ENCODE measurements at regions of chr2 and their contacts with region 1.

Region 1: GRCh38 chr2:200306196-200306930 is at the start of gene SPATS2L:
- DNase-seq: no peak
- ATAC-seq: peak; percentile 87
- H3K4me3 ChIP-seq: peak within 1 kb of the TSS; percentile 72 to 84
- H3K27ac ChIP-seq: peak within 1 kb of the TSS; percentile 98
- H3K4me1 ChIP-seq: peaks cover 67% of the 10 kb centered on the region
- H3K27me3 ChIP-seq: no peaks in the 10 kb centered on the region
- CTCF ChIP-seq: no peak
- total RNA-seq, gene SPATS2L: 282 TPM

Region 2: GRCh38 chr2:199979832-199980628 is 326.3 kb before region 1 on chr2:
- CTCF ChIA-PET with region 1: no interaction called
- POLR2A ChIA-PET with region 1: no interaction called
- in situ Hi-C with region 1: no loop called
- intact Hi-C with region 1: loop called (anchors 2 kb)
- DNase-seq: no peak
- ATAC-seq: peak; percentile 87
- H3K4me3 ChIP-seq: peak overlapping the region in 1 of 2 experiments; percentile 25; a peak in 2 of 4 replicates
- H3K27ac ChIP-seq: peak overlapping the region; percentile 74
- H3K4me1 ChIP-seq: peaks cover 17% of the 10 kb centered on the region
- H3K27me3 ChIP-seq: no peaks in the 10 kb centered on the region
- CTCF ChIP-seq: peak; percentile 89

Region 3: DNA sequence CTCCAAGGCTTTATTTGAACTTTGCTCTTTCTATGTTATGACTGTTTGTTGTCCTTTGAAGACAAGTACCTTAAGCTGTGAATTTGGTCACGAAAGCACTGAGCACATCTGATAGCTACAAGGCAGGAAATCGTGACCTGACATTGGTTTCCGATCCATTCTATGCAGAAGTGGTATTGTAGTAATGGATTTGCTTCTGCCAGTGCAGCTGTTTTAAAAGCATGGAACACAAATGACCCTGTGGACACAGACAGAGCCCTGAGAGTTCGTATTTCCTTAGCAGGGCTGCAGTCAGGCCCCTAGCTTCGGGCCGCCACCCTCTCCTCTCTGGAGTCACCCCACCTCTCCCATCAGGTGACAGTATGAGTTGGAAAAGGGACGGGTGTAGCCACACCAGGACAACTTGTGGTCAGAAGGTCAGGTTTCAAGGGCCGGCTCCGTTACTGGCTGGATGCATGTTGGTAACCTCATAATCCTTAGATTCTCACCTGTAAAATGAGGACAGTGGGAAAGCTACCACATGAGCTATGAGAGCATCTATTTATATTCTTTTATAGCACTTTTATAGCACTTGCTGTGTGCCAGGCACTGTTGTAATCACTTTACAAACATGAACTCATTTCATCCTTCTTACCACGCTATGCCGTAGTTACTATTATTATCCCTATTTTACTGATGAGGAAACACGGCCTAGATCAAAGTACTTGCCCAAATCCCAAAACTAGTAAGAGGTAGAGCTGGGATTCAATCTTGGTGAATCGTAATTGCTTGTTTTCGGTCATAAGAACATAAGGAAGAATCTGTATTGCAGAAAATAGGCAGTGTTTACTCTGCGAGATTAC is 70.4 kb after region 1 on chr2:
- CTCF ChIA-PET with region 1: no interaction called
- POLR2A ChIA-PET with region 1: no interaction called
- in situ Hi-C with region 1: no loop called
- intact Hi-C with region 1: loop called (anchors 5 kb)
- DNase-seq: peak; percentile 77
- ATAC-seq: peak; percentile 40
- H3K4me3 ChIP-seq: peak overlapping the region in 1 of 2 experiments; percentile 65; a peak in 2 of 4 replicates
- H3K27ac ChIP-seq: peak overlapping the region; percentile 100
- H3K4me1 ChIP-seq: peaks cover 91% of the 10 kb centered on the region
- H3K27me3 ChIP-seq: no peaks in the 10 kb centered on the region
- CTCF ChIP-seq: no peak

Region 4: DNA sequence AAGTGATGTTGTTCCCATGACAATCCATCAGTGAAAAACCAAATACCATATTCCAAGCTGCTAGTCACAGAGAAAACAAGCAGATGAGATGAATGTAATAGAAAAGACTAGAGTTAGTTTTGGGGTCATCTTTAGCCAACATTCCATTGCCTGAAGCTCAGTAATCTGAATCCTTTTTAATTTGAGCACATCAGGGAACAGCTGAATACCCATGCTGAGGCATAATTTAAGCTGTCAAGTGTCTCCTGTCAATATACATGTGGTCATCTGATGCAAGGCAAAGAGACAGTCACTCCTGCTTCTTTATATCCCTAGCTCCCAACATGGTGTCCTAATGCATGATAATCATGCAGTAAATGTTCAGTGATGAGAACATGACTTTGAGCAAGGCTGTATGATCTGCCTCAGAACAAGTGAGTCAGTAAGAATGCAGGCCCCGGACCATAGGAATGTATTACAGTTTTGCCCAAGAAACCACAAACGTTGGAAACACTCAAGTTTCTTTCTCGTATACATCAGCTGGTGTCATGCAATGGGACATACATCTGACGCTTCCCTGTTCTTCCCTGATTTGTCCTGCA is 1547.9 kb after region 1 on chr2:
- CTCF ChIA-PET with region 1: no interaction called
- POLR2A ChIA-PET with region 1: no interaction called
- in situ Hi-C with region 1: no loop called
- intact Hi-C with region 1: no loop called
- DNase-seq: no peak
- ATAC-seq: peak; percentile 86
- H3K4me3 ChIP-seq: no peak overlapping the region
- H3K27ac ChIP-seq: no peak overlapping the region; the same call in 1 of the 2 replicates
- H3K4me1 ChIP-seq: peaks cover 8% of the 10 kb centered on the region; the same call in 1 of the 2 replicates
- H3K27me3 ChIP-seq: no peaks in the 10 kb centered on the region
- CTCF ChIP-seq: no peak